ENCODE measurements at regions of chr11 and their contacts with region 1.

Region 1: DNA sequence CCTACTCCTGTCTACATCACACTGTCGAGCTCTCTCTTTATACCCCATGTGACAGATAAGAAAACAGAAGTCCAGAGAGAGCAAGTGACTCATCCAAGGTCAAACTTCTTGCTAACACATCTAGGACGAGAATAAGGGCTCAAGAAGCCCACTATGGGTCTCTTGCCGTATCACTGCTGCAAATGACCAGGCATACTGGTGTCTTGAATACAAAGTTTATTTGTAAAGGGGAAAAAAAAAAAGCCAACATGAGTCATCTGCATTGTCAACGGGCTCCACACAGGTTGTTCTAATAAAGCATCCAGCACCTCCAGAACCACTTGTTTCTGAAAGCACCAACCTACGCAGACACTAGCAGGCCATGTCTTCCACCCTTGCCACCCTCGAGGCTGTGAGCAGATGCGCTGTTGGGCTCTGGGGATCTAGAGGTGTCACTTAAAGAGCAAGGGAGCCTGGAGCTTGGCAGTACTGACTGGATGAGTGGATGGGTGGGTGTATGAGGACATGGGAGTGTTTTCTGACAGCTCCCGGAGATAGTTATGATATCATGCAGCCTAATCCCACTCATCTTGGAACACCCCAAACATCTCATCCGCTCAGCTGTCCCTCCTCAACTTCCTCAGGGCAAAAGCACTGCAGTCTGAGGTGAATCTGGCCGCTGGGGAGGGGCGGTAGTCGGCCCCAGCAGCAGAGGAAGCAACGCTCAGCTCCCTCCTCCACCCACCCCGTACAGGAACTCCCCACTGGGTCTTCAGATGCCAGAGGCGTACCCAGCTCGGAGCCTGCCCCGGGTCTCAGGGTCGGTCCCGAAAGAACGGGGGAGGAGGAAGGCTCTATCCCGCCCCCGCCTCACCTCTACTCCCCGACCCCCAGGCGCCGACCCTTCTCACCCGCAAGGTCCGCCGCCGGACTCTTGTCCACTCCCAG is 1.0 kb downstream of the SMCO4 start:
- DNase-seq: peak; percentile 73
- CTCF ChIP-seq: no peak

Region 2: GRCh38 chr11:93234602-93235207 is 307.4 kb before region 1 on chr11:
- CTCF ChIA-PET with region 1: interaction called, 19 read pairs
- POLR2A ChIA-PET with region 1: no interaction called
- DNase-seq: peak; percentile 69
- CTCF ChIP-seq: peak; percentile 98

Region 3: GRCh38 chr11:93458286-93458685 is 83.9 kb before region 1 on chr11:
- CTCF ChIA-PET with region 1: no interaction called
- POLR2A ChIA-PET with region 1: no interaction called
- DNase-seq: no peak
- CTCF ChIP-seq: no peak

Region 4: GRCh38 chr11:93524173-93524536 is 18.0 kb before region 1 on chr11:
- CTCF ChIA-PET with region 1: interaction called, 33 read pairs
- POLR2A ChIA-PET with region 1: no interaction called
- DNase-seq: no peak
- CTCF ChIP-seq: no peak

Region 5: DNA sequence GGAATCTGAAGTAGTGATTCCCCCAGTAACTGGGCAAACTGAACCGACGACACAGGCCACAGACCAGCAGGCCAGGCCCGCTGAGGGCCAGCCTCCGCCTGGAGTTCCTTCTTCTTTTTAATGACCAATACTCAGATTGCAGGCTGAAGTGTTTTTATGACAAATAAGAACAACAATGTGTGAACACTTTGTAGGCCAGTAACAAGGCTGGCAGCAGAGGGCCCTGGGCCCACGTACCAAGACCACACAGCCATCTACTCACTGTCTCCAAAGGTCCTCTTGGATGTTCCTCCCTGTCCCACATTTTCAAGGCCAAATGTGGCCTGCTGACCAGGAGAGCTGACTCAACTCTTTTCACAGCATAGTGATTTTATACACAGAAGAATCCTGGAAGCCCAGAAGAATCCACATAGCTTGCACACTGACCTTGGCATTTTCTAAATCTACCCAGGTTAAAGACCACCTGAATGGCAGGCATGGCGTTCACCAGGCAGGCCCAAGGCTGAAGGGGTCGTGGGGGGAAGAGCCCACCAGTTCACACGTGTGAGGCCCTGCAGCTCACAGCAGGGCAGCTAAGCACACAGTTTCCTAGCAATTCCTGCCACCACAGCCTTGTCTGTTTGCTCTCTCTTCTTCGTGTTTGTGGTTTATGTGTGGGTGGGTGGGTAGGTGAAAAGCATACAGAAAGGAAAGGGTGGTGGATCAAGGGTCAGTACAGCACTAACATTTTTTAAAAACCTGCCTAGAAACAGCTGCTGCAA is 12.3 kb before region 1 on chr11:
- CTCF ChIA-PET with region 1: interaction called, 33 read pairs
- POLR2A ChIA-PET with region 1: interaction called, 6 read pairs
- DNase-seq: no peak
- CTCF ChIP-seq: no peak

Region 6: GRCh38 chr11:94060405-94060804 is 518.3 kb after region 1 on chr11:
- CTCF ChIA-PET with region 1: no interaction called
- POLR2A ChIA-PET with region 1: no interaction called
- DNase-seq: no peak
- CTCF ChIP-seq: no peak

Region 7: GRCh38 chr11:94926698-94927237 is 1384.6 kb after region 1 on chr11:
- CTCF ChIA-PET with region 1: no interaction called
- POLR2A ChIA-PET with region 1: no interaction called
- DNase-seq: no peak
- CTCF ChIP-seq: no peak

Measured in GM10248 (cell line).